ENCODE measurements at regions of chr7 and their contacts with region 1.

Region 1: GRCh38 chr7:30164567-30164966 is 29.8 kb downstream of the MTURN start:
- DNase-seq: peak; percentile 77
- H3K4me3 ChIP-seq: no peak overlapping the region
- H3K27ac ChIP-seq: peak overlapping the region; percentile 90
- H3K4me1 ChIP-seq: peaks cover 65% of the 10 kb centered on the region
- H3K27me3 ChIP-seq: no peaks in the 10 kb centered on the region
- CTCF ChIP-seq: peak; percentile 62 to 68

Region 2: GRCh38 chr7:30026229-30027064 is 138.1 kb before region 1 on chr7 and contains the start of gene FKBP14:
- CTCF ChIA-PET with region 1: no interaction called
- dilution Hi-C with region 1: no loop called
- in situ Hi-C with region 1: no loop called
- intact Hi-C with region 1: loop called (anchors 2 kb)
- DNase-seq: peak; percentile 99
- H3K4me3 ChIP-seq: peak within 1 kb of the TSS; percentile 79 to 84 (median 83)
- H3K27ac ChIP-seq: peak within 1 kb of the TSS; percentile 81
- H3K4me1 ChIP-seq: peaks cover 18% of the 10 kb centered on the region
- H3K27me3 ChIP-seq: no peaks in the 10 kb centered on the region
- CTCF ChIP-seq: no peak
- total RNA-seq, gene FKBP14: 29.7 to 37.4 TPM

Region 3: GRCh38 chr7:30134611-30135545 is 29.7 kb before region 1 on chr7 and contains the start of gene MTURN:
- CTCF ChIA-PET with region 1: no interaction called
- dilution Hi-C with region 1: no loop called
- in situ Hi-C with region 1: no loop called
- intact Hi-C with region 1: loop called (anchors 2 kb)
- DNase-seq: peak; percentile 76
- H3K4me3 ChIP-seq: peak within 1 kb of the TSS; percentile 57 to 74 (median 73)
- H3K27ac ChIP-seq: peak within 1 kb of the TSS; percentile 66
- H3K4me1 ChIP-seq: peaks cover 14% of the 10 kb centered on the region
- H3K27me3 ChIP-seq: no peaks in the 10 kb centered on the region
- CTCF ChIP-seq: no peak
- total RNA-seq, gene MTURN: 9.7 to 15.5 TPM

Region 4: GRCh38 chr7:30276203-30276900 is 111.8 kb after region 1 on chr7:
- CTCF ChIA-PET with region 1: interaction called, 7 read pairs
- dilution Hi-C with region 1: no loop called
- in situ Hi-C with region 1: no loop called
- intact Hi-C with region 1: loop called (anchors 2 kb)
- DNase-seq: peak; percentile 39
- H3K4me3 ChIP-seq: no peak overlapping the region
- H3K27ac ChIP-seq: no peak overlapping the region
- H3K4me1 ChIP-seq: no peaks in the 10 kb centered on the region
- H3K27me3 ChIP-seq: no peaks in the 10 kb centered on the region
- CTCF ChIP-seq: peak; percentile 68 to 76

Region 5: GRCh38 chr7:30348083-30348560 is 183.6 kb after region 1 on chr7:
- CTCF ChIA-PET with region 1: no interaction called
- dilution Hi-C with region 1: no loop called
- in situ Hi-C with region 1: no loop called
- intact Hi-C with region 1: loop called (anchors 1 kb)
- DNase-seq: peak; percentile 92
- H3K4me3 ChIP-seq: peak overlapping the region in 1 of 3 experiments; percentile 41
- H3K27ac ChIP-seq: peak overlapping the region; percentile 68
- H3K4me1 ChIP-seq: peaks cover 21% of the 10 kb centered on the region
- H3K27me3 ChIP-seq: no peaks in the 10 kb centered on the region
- CTCF ChIP-seq: no peak

Region 6: DNA sequence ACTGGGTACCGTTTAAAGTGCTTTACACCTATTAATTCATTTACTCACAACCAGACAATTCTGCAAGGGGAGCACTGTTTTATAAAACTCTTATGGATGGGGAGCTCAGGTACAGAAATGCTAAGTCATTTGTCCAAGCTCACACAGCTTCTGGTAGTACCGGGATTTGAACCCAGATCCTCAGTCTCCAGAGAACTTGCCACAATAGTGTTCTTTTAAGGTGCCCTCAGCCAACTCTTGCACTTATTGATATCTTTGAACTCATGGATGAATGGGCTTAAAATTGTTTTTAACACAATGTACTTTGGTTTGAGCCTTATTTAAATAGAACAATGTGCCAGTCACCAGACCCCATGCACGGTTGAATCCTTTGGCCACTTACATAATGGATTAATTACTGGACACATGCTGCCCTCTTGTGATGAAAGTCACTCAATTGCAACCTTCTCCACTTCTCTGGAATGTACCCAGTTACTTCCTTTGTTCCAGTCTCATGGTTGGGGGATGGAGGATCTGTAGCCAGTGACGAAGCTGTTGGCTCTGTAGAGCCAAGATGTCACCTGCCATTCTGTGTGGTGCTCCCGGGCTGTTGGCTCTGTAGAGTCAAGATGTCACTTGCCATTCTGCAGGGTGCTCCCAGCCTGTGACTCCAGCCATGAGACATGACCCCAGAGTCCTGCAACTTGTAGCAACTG is 248.4 kb after region 1 on chr7:
- CTCF ChIA-PET with region 1: no interaction called
- dilution Hi-C with region 1: no loop called
- in situ Hi-C with region 1: loop called (anchors 5 kb)
- intact Hi-C with region 1: loop called (anchors 2 kb)
- DNase-seq: peak; percentile 78
- H3K4me3 ChIP-seq: no peak overlapping the region
- H3K27ac ChIP-seq: no peak overlapping the region
- H3K4me1 ChIP-seq: peaks cover 5% of the 10 kb centered on the region
- H3K27me3 ChIP-seq: no peaks in the 10 kb centered on the region
- CTCF ChIP-seq: peak; percentile 62 to 67

Region 7: GRCh38 chr7:30911561-30911969 is 747.0 kb after region 1 on chr7 and contains the start of gene AQP1:
- CTCF ChIA-PET with region 1: no interaction called
- dilution Hi-C with region 1: no loop called
- in situ Hi-C with region 1: no loop called
- intact Hi-C with region 1: no loop called
- DNase-seq: no peak
- H3K4me3 ChIP-seq: no peak within 1 kb of the TSS
- H3K27ac ChIP-seq: no peak within 1 kb of the TSS
- H3K4me1 ChIP-seq: peaks cover 15% of the 10 kb centered on the region
- H3K27me3 ChIP-seq: no peaks in the 10 kb centered on the region
- CTCF ChIP-seq: no peak
- total RNA-seq, gene AQP1: 0.17 TPM in 1 of 2 donors, not detected in the other